Body of pancreas (tissue), 4 donors: ENCODE measurements at regions of chr14 and their contacts with region 1.

Region 1: GRCh38 chr14:45531022-45531421 is 278.0 kb upstream of the MIS18BP1 start:
- DNase-seq: no peak
- ATAC-seq: no peak
- H3K4me3 ChIP-seq: no peak overlapping the region
- H3K27ac ChIP-seq: no peak overlapping the region
- H3K4me1 ChIP-seq: no peaks in the 10 kb centered on the region
- H3K27me3 ChIP-seq: no peaks in the 10 kb centered on the region
- CTCF ChIP-seq: no peak
- POLR2A ChIP-seq: no peak

Region 2: DNA sequence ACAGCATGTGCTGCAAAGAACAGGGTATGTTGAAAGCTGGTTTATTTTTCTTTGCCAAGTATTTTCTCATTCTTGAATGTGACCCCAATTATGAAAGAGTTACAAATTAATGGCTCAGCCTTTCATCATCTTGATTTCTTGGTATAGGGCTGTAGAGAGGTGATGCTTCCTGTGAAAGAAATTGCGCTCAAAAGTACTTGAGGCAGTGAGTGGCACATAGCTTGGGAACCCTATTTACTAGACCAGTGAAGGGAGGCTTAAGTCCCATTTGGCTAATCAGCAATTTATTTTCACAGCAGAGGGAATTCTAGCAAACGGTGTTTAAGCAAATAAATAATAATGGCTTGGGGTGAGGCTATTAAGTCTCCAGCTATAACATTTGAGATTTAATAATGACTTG is 124.1 kb before region 1 on chr14:
- intact Hi-C with region 1: loop called (anchors 10 kb)
- DNase-seq: no peak
- ATAC-seq: no peak
- H3K4me3 ChIP-seq: no peak overlapping the region
- H3K27ac ChIP-seq: no peak overlapping the region
- H3K4me1 ChIP-seq: no peaks in the 10 kb centered on the region
- H3K27me3 ChIP-seq: no peaks in the 10 kb centered on the region
- CTCF ChIP-seq: no peak
- POLR2A ChIP-seq: no peak